Aorta (tissue), 5 donors: ENCODE measurements at regions of chr7 and their contacts with region 1.

Region 1: DNA sequence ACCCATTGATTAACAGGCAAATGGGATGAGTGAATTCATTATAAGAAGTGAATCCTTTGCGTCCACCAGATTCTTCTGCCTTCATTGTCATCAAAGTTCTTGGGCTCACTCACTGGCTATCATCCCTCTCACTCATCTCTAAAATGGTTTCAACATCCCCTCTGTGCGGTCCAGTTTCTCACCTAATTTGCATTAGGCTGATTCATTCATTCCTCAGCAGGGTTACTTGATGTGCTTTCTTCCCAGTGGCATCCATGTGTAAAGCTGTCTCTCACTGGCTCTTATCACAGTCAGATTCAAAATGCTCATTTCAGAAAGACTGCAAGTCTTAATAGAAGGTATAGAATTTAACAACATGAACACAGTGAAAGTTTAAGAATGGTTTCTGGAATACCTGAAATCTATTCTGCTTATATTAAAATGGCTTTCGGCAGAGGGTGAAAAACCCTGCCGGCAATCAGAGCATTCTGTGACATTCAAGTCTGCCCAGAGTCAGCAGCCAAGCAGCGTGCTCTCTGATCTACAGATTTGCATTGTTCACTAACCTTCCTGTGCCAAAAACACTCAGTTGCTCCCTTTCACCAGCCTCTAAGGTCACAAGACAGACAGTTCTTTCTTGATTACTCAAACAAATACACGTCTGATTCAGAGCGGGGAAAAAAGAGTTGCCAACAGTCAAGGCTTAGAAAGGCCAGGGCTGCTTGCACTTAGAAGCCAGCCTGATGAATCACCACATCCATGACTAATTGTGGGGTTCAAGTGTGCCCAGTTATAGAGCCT is 106.7 kb downstream of the TES start:
- DNase-seq: peak; percentile 55 to 76
- ATAC-seq: peak; percentile 92
- H3K4me3 ChIP-seq: peak overlapping the region in 1 of 2 donors; percentile 15
- H3K27ac ChIP-seq: peak overlapping the region in 1 of 2 donors; percentile 68
- H3K4me1 ChIP-seq: peaks cover 0 to 2% of the 10 kb centered on the region in 2 donors
- H3K27me3 ChIP-seq: no peaks in the 10 kb centered on the region

Region 2: GRCh38 chr7:116271963-116272839 is 44.8 kb before region 1 on chr7:
- intact Hi-C with region 1: loop called in 1 of 2 experiments (anchors 5 kb)
- DNase-seq: peak in 1 of 2 donors; percentile 50
- ATAC-seq: peak; percentile 90
- H3K4me3 ChIP-seq: no peak overlapping the region
- H3K27ac ChIP-seq: peak overlapping the region; percentile 76 to 97
- H3K4me1 ChIP-seq: peaks cover 3 to 14% of the 10 kb centered on the region in 2 donors
- H3K27me3 ChIP-seq: no peaks in the 10 kb centered on the region

Region 3: DNA sequence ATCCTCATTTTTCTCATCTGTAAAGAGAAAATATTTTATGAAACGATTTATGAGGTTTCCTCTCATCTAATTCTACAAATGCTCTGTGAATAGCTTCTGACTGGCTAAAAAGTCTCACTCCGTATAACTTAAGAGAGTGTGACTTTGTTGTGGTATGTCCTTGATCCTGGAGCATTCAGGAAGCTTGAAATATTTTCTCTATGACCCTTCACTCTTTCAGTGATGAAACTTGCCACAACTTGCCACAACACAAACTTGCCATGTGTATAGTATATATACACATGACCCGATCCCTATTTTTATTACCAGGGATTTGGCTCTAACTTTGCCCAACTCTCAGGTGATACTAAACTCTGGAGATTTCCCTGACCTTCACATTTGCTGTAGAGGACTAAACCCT is 32.6 kb before region 1 on chr7:
- intact Hi-C with region 1: loop called (anchors 5 kb)
- DNase-seq: no peak
- ATAC-seq: no peak
- H3K4me3 ChIP-seq: no peak overlapping the region
- H3K27ac ChIP-seq: no peak overlapping the region
- H3K4me1 ChIP-seq: peaks cover 0 to 2% of the 10 kb centered on the region in 2 donors
- H3K27me3 ChIP-seq: no peaks in the 10 kb centered on the region

Region 4: GRCh38 chr7:116354546-116355408 is 37.8 kb after region 1 on chr7:
- intact Hi-C with region 1: loop called in 1 of 2 experiments (anchors 2 kb)
- DNase-seq: peak; percentile 62 to 81
- ATAC-seq: peak; percentile 82
- H3K4me3 ChIP-seq: peak overlapping the region in 1 of 2 donors; percentile 21
- H3K27ac ChIP-seq: peak overlapping the region; percentile 89 to 90
- H3K4me1 ChIP-seq: peaks cover 7 to 15% of the 10 kb centered on the region in 2 donors
- H3K27me3 ChIP-seq: no peaks in the 10 kb centered on the region

Region 5: GRCh38 chr7:116365797-116366196 is 48.8 kb after region 1 on chr7:
- intact Hi-C with region 1: no loop called
- DNase-seq: no peak
- ATAC-seq: no peak
- H3K4me3 ChIP-seq: no peak overlapping the region
- H3K27ac ChIP-seq: no peak overlapping the region
- H3K4me1 ChIP-seq: peaks cover 0 to 3% of the 10 kb centered on the region in 2 donors
- H3K27me3 ChIP-seq: no peaks in the 10 kb centered on the region